ENCODE measurements at regions of chr2 and their contacts with region 1.

Region 1: DNA sequence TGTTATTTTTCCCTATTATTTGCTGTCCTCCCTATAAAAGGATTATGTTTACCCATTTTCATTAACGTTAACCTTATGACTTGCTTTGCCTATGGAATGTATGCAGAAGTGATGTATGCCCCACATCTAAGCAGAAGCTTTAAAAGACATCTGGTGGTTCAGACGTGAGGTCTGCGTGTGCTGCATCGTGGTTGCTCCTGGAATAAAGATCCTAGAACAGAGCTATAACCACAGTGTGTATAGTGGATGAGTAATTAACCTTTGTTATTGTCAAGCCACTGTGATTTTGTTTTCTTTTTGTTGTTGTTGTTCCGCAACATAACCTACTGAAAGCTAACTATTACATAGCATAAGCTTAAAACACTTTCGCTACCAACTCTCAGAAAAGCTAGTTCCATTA is 20.9 kb upstream of the CFAP36 start:
- DNase-seq: no peak

Region 2: GRCh38 chr2:53767405-53768241 is 1731.0 kb before region 1 on chr2 and contains the start of gene CHAC2:
- intact Hi-C with region 1: loop called in 1 of 2 experiments (anchors 5 kb)
- DNase-seq: peak; percentile 95
- total RNA-seq, gene CHAC2: 1.5 to 3.1 TPM

Region 3: DNA sequence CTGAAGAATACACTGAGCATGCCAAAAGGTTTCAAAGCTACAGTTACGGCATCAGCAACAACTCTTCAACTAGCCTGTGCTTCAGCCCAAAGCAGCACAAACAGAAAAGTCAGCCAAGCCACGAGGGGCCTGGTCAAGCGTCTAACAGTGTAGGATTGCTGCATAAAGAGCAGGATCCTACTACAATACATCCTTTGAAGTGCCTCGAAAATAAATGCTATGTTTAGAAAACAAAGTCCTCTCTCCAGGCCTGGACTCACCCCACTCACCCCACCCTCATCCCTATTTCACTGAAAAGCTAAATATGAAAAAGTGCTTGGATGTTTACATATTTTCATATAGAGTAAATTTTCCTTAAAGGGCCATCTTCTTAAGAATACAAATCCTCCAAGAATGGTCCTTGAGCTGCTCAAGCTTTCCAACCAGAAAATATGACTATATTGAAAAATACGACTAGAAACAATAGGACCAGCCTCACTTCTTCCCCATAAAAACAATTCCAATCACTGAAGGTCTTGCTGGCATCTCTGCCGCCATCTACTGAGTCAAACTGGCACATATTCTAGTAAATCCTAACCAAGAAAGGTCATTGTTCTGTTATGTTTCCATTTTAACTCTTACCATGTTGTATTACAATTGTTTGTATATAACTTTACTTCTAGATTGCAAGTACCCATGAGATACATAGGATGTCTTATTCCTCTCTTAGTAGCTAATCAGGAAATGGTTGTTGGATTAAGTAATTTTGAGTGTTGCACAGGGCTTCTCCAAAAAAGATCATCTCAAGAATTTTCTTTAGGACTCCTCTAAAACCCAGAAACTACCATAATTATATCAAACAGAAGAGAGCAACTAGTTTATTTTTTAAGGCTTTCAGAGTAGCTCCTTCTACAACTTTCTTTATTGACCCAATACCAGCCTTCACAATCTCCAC is 330.1 kb before region 1 on chr2:
- intact Hi-C with region 1: no loop called
- DNase-seq: peak; percentile 81

Region 4: DNA sequence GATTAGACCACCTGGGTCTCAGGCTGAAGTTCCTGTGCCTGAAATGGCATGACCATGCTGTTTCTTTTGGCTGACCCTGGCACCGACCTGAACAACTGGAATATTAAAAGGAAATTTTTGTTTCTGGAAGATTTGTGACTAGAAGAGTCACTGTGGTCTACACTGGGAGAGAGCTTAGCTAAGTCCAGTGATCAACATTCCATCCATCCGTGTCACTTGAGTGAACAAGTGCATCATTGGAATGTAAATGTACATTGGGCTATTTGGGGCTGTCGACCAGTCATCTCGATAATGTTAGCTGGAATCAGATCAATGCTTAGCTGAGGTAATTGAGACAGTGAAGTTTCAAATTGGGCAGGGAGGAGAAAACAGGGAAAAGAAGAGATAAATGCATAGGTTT is 589.8 kb after region 1 on chr2:
- intact Hi-C with region 1: no loop called
- DNase-seq: no peak

Measured in posterior vena cava (tissue), 2 donors.